Dorsolateral prefrontal cortex (tissue), 120 donors: ENCODE measurements at regions of chr7 and their contacts with region 1.

Region 1: GRCh38 chr7:100889761-100890634 is 483 bp upstream of the UFSP1 start:
- DNase-seq: peak; percentile 83 to 97 (median 94)
- H3K4me3 ChIP-seq: peak overlapping the region; percentile 56 to 94 (median 80)
- H3K27ac ChIP-seq: peak overlapping the region; percentile 50 to 97 (median 90)
- H3K27me3 ChIP-seq: peaks cover 0 to 6% (median 0%) of the 10 kb centered on the region in 45 donors
- CTCF ChIP-seq: peak in 14 of 56 donors; percentile 1 to 45 (median 11)

Region 2: GRCh38 chr7:99860281-99861127 is 1029.5 kb before region 1 on chr7:
- intact Hi-C with region 1: no loop called
- DNase-seq: no peak
- H3K4me3 ChIP-seq: no peak overlapping the region
- H3K27ac ChIP-seq: no peak overlapping the region
- H3K27me3 ChIP-seq: no peaks in the 10 kb centered on the region
- CTCF ChIP-seq: no peak

Region 3: GRCh38 chr7:100874577-100875355 is 15.2 kb before region 1 on chr7 and contains the start of gene SRRT:
- intact Hi-C with region 1: loop called (anchors 1 to 2 kb)
- DNase-seq: peak; percentile 98 to 99 (median 99)
- H3K4me3 ChIP-seq: peak within 1 kb of the TSS; percentile 69 to 100 (median 94)
- H3K27ac ChIP-seq: peak within 1 kb of the TSS; percentile 79 to 100 (median 98)
- H3K27me3 ChIP-seq: no peaks in the 10 kb centered on the region
- CTCF ChIP-seq: peak in 54 of 56 donors; percentile 9 to 72 (median 47)
- total RNA-seq, gene SRRT: 60.4 to 142 (median 97.9) TPM

Region 4: GRCh38 chr7:101153969-101154692 is 264.1 kb after region 1 on chr7 and contains the start of gene AP1S1:
- intact Hi-C with region 1: loop called in 1 of 2 experiments (anchors 5 kb)
- DNase-seq: peak; percentile 88 to 96 (median 92)
- H3K4me3 ChIP-seq: peak within 1 kb of the TSS; percentile 66 to 94 (median 83)
- H3K27ac ChIP-seq: peak within 1 kb of the TSS in 48 of 59 donors; percentile 1 to 90 (median 64)
- H3K27me3 ChIP-seq: no peaks in the 10 kb centered on the region
- CTCF ChIP-seq: peak in 22 of 56 donors; percentile 2 to 48 (median 20)
- total RNA-seq, gene AP1S1: 39.7 to 176 (median 100.0) TPM

Region 5: GRCh38 chr7:101217388-101218235 is 327.6 kb after region 1 on chr7 and contains the starts of genes PLOD3 and ZNHIT1:
- intact Hi-C with region 1: loop called in 1 of 2 experiments (anchors 10 kb)
- DNase-seq: peak; percentile 88 to 97 (median 94)
- H3K4me3 ChIP-seq: peak within 1 kb of the TSS; percentile 54 to 99 (median 88)
- H3K27ac ChIP-seq: peak within 1 kb of the TSS in 58 of 59 donors; percentile 75 to 99 (median 95)
- H3K27me3 ChIP-seq: no peaks in the 10 kb centered on the region
- CTCF ChIP-seq: peak in 37 of 56 donors; percentile 6 to 63 (median 31)
- total RNA-seq, gene PLOD3: 26.7 to 217 (median 56.2) TPM
- total RNA-seq, gene ZNHIT1: 36.5 to 63.3 (median 50.0) TPM